ENCODE measurements at regions of chr10 and their contacts with region 1.

Region 1: GRCh38 chr10:73922007-73922863 is 11.3 kb downstream of the PLAU start:
- DNase-seq: peak; percentile 86
- H3K4me3 Mint-ChIP-seq: peak overlapping the region; percentile 13
- H3K27ac Mint-ChIP-seq: no peak overlapping the region
- H3K4me1 Mint-ChIP-seq: peaks cover 22% of the 10 kb centered on the region
- H3K27me3 Mint-ChIP-seq: peaks cover 35% of the 10 kb centered on the region

Region 2: DNA sequence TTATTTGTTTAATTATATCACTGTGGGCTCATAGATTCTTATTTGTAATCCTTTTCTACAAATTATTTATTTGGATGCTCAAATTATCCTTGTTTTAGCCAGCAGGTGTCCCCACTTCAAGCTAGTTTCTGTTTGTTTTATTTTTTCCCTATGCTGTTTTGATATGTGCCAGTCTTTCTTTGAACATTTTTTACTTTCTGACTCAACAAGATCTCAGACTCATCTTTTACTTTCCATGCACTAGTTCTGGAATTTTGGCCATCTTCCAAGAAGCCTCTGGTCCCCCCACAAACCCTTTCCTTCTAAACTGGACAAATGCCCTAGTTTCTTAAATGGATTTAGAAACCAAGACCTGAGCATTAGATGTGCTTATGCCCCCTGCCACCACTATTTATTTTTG is 658.3 kb before region 1 on chr10:
- intact Hi-C with region 1: no loop called
- DNase-seq: no peak
- H3K4me3 Mint-ChIP-seq: no peak overlapping the region
- H3K27ac Mint-ChIP-seq: no peak overlapping the region
- H3K4me1 Mint-ChIP-seq: peaks cover 4% of the 10 kb centered on the region
- H3K27me3 Mint-ChIP-seq: peaks cover 14% of the 10 kb centered on the region

Region 3: DNA sequence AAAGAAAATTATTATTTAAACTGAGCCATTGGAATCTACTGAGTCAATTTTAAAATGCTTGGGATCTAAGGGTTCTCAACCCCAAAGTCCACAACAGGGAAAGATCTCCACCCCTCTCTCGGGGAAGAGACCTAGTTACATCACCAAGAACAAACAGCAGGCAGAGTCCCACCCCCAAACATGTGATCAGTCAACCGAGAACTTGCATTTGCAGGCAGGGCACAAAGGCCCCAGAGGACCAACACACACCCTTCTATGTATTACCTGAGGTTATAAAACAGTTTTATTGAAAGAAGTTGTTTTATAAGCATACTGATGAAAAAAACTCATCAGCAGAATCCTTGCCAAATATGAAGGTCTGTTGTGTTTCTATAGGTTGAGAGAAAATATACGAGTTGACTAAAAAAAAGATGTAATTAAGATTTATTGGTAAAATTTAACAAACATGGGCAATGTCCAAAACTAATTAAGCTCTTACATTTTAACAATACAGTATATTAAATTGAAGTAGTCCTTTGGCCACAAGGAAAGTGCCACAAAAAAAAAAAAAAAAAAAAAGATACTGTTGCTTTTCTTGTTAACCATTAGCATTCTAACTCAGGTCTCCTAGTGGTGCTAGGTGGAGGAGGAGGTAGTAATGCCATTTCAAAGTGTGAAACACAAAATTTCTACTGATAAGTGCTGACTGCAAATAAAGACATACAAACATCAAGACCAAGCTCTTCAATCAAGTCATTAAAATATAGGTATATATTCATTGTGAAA is 330.1 kb before region 1 on chr10:
- intact Hi-C with region 1: no loop called
- DNase-seq: peak; percentile 77
- H3K4me3 Mint-ChIP-seq: peak overlapping the region; percentile 72
- H3K27ac Mint-ChIP-seq: peak overlapping the region; percentile 62
- H3K4me1 Mint-ChIP-seq: peaks cover 19% of the 10 kb centered on the region
- H3K27me3 Mint-ChIP-seq: no peaks in the 10 kb centered on the region

Region 4: GRCh38 chr10:73910764-73911552 is 11.3 kb before region 1 on chr10 and contains the start of gene PLAU:
- intact Hi-C with region 1: loop called (anchors 1 kb)
- DNase-seq: peak; percentile 84
- H3K4me3 Mint-ChIP-seq: peak within 1 kb of the TSS; percentile 90
- H3K27ac Mint-ChIP-seq: peak within 1 kb of the TSS; percentile 81
- H3K4me1 Mint-ChIP-seq: peaks cover 42% of the 10 kb centered on the region
- H3K27me3 Mint-ChIP-seq: peaks cover 40% of the 10 kb centered on the region
- total RNA-seq, gene PLAU: 0.57 and 0.72 TPM in 2 replicates

Region 5: DNA sequence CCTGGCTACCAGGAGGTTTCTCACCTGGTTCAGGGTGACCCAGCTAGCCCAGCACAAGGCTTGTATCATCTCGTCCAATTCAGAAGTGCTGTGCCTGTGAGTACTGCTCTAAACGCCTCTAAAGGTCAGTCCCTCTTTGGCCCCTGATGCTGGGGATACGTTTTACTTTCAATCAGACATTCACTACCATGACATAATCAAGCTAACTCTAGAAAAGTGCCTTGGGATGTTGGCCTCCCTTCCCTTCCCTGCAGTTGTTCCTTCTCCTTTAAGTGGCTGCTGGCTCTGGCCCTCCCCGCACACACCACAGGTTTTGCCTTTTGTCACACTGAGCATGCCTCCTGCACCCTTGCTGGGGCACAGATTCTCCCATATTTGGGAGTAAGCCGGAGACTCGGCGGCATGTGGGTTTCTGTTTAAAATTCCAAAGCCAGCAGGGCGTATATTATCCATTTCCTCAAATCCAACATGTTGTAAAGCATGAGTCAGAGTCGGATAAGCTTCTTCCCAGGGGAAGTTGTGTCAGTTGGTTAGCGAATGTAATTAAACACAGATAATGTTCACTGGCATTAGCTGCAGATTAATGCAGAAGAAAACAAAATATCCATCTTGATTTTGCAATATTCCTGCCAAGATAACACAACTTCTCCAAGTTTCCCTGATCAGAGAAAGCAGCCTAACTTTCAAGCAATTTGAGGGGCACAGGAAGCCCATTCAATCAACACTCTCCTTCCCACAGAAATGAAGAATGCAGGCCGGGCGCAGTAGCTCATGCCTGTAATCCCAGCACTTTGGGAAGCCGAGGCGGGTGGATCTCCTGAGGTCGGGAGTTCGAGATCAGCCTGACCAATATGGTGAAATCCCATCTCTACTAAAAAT is 43.9 kb after region 1 on chr10:
- intact Hi-C with region 1: no loop called
- DNase-seq: no peak
- H3K4me3 Mint-ChIP-seq: no peak overlapping the region
- H3K27ac Mint-ChIP-seq: no peak overlapping the region
- H3K4me1 Mint-ChIP-seq: no peaks in the 10 kb centered on the region
- H3K27me3 Mint-ChIP-seq: peaks cover 8% of the 10 kb centered on the region